Calu3 (cell line): ENCODE measurements at regions of chr6 and their contacts with region 1.

Region 1: GRCh38 chr6:47200536-47201334 is 109.0 kb downstream of the TNFRSF21 start:
- DNase-seq: no peak
- H3K4me3 Mint-ChIP-seq: no peak overlapping the region
- H3K27ac Mint-ChIP-seq: no peak overlapping the region
- H3K4me1 Mint-ChIP-seq: peaks cover 57% of the 10 kb centered on the region
- H3K27me3 Mint-ChIP-seq: no peaks in the 10 kb centered on the region
- CTCF ChIP-seq: no peak

Region 2: DNA sequence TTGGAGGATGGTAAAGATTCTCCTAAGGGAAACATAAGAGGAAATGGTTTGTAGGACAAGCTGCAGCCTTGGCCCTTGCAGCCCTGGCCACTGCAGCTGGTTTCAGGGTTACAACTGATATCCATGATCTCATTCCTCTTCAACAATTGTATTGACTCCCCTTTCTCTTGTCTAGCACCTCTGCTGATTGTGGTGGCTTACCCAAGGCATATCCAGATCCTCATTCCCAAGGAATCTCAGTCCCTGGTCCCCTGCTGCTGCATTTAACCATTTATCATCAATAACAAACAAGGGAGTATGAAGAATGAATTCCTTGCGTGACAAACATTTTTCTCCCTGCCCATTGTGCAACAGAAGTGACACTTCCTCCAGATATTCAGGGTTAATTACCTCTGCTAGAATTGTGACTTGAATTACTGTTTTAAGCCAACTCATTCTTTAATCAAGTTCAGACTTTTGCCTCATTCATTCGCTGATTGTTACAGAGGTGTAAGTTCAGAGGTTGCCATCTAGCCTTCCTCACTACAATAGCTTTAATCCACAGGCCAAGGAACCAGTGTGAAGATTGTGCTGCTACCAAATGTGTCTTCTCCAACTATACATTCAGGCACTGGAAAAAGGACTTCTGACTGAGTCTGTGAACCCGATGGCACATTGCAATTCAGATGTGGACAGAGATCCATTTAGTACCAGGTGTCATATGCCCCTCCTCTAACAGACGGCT is 47.5 kb before region 1 on chr6:
- CTCF ChIA-PET with region 1: no interaction called
- intact Hi-C with region 1: loop called (anchors 1 kb)
- DNase-seq: peak; percentile 31
- H3K4me3 Mint-ChIP-seq: no peak overlapping the region
- H3K27ac Mint-ChIP-seq: peak overlapping the region; percentile 10
- H3K4me1 Mint-ChIP-seq: peaks cover 48% of the 10 kb centered on the region
- H3K27me3 Mint-ChIP-seq: no peaks in the 10 kb centered on the region
- CTCF ChIP-seq: no peak

Region 3: GRCh38 chr6:47424436-47424836 is 223.7 kb after region 1 on chr6:
- CTCF ChIA-PET with region 1: no interaction called
- intact Hi-C with region 1: no loop called
- DNase-seq: no peak
- H3K4me3 Mint-ChIP-seq: no peak overlapping the region
- H3K27ac Mint-ChIP-seq: no peak overlapping the region
- H3K4me1 Mint-ChIP-seq: peaks cover 32% of the 10 kb centered on the region
- H3K27me3 Mint-ChIP-seq: no peaks in the 10 kb centered on the region
- CTCF ChIP-seq: no peak